AG04449 (cell line): ENCODE measurements at regions of chr3 and their contacts with region 1.

Region 1: DNA sequence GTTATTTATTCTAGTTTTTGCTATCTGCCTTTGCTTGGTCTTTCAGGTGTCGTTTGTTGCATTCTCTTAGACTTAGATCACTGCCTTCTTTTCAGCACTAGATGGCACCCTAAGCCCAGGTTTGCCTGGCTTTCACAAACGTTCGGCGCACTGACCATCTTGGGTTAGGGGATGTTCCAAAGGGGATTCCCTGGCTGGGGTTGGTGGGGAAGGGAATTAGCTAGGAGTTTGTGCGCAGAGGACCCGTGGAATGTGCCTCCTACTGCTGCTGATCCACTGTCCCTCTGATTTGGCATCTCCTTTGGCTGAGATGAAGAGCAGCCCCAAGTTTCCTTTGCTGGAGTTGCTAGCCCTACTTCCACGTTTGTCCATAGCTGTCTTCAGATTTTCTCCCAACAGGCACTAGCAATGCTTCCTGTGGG is 33.9 kb downstream of the PFN2 start:
- DNase-seq: no peak
- H3K4me3 ChIP-seq: no peak overlapping the region
- CTCF ChIP-seq: peak; percentile 72

Region 2: GRCh38 chr3:149947231-149947630 is 10.4 kb after region 1 on chr3:
- CTCF ChIA-PET with region 1: interaction called, 19 read pairs
- POLR2A ChIA-PET with region 1: no interaction called
- DNase-seq: no peak
- H3K4me3 ChIP-seq: no peak overlapping the region
- CTCF ChIP-seq: no peak

Region 3: DNA sequence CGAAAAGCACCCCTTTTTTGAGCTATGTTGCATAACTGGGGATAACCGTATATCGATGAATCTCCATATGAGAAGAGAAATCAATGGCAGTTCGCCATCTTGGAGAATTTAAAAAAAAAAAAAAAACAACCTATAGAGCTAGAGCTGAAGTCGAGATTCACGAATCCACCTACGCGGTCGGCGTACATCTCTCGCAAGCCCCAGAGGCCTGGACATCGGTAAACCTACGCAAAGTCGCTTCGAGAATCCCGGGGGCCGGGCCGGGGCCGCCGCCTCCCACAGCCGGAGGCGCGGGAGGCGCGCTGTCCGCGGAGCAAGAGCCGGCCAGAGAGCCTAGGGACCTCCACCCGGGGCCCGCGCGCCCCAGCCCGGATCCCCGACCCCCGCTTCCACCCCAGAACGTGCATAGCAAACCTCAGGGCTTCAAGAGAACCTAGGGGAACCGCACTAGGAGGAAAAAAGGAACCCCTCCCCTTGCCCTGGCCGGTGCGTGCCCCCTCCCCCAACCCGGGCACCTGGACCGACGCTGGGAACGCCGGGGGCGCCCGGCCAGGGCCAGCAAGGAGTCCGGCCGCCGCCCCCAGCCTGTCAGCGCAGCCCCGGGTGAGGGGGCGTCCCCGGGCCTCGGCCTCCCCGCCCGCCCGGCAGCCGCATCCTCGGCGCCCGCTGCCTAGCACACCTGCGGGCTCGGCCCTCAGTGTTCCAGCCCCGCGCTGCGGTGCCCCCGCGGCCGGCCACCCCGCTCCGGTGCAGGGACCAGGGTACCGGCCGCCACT is 33.3 kb after region 1 on chr3:
- CTCF ChIA-PET with region 1: interaction called, 47 read pairs
- POLR2A ChIA-PET with region 1: no interaction called
- DNase-seq: no peak
- H3K4me3 ChIP-seq: peak overlapping the region; percentile 83
- CTCF ChIP-seq: no peak

Region 4: GRCh38 chr3:150210461-150211110 is 273.8 kb after region 1 on chr3:
- CTCF ChIA-PET with region 1: interaction called, 103 read pairs
- POLR2A ChIA-PET with region 1: no interaction called
- DNase-seq: no peak
- H3K4me3 ChIP-seq: no peak overlapping the region
- CTCF ChIP-seq: no peak

Region 5: GRCh38 chr3:150227839-150228238 is 291.0 kb after region 1 on chr3:
- CTCF ChIA-PET with region 1: interaction called, 86 read pairs
- POLR2A ChIA-PET with region 1: interaction called, 4 read pairs
- DNase-seq: no peak
- H3K4me3 ChIP-seq: no peak overlapping the region
- CTCF ChIP-seq: peak; percentile 84